ENCODE measurements at regions of chr3 and their contacts with region 1.

Region 1: GRCh38 chr3:108589146-108589997 is at the starts of genes CIP2A and DZIP3:
- DNase-seq: peak; percentile 64 to 96 (median 76)
- ATAC-seq: peak; percentile 80
- H3K4me3 ChIP-seq: peak within 1 kb of the TSS; percentile 79
- H3K4me3 Mint-ChIP-seq: peak within 1 kb of the TSS; percentile 96
- H3K27ac ChIP-seq: peak within 1 kb of the TSS; percentile 89 to 96
- H3K27ac Mint-ChIP-seq: peak within 1 kb of the TSS; percentile 99
- H3K4me1 ChIP-seq: peaks cover 12% of the 10 kb centered on the region
- H3K4me1 Mint-ChIP-seq: peaks cover 40% of the 10 kb centered on the region
- H3K27me3 ChIP-seq: no peaks in the 10 kb centered on the region
- H3K27me3 Mint-ChIP-seq: no peaks in the 10 kb centered on the region
- CTCF ChIP-seq: no peak
- total RNA-seq, gene CIP2A: 2.7 to 3.9 TPM
- total RNA-seq, gene DZIP3: 12.2 to 14.5 TPM

Region 2: DNA sequence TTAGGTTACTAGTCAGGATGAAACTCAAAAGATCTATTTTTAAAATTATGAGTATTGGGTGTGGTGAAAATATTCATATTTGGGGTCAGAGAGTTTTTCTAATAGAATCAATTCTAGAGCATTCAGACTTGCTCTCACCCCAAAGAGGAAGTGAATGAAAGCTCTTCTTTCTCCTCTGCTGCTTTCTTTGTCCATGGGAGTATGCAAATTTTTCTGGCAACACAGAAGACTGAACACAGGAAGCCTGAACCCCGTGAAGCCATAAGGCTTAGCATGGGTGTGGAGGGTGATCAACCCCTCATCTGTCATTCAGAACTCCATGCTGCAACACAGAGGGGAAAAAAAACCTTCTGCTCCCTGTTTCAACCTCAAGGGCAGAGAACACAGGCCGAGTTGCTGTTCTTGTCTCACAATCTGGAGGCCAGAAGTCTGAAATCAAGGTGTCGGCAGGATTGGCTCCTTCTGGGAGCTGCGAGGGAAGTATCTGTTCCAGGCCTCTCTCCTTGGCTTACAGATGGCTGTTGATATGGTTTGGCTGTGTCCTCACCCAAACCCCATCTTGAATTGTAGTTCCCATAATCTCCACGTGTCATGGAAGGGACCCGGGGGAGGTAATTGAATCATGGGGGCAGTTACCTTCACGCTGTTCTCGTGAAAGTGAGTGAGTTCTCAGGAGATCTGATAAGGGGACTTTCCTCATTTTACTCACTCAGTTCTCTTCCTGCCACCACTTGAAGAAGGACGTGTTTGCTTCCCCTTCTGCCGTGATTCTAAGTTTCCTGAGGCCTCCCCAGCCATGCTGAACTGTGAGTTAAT is 464.8 kb before region 1 on chr3:
- CTCF ChIA-PET with region 1: no interaction called
- POLR2A ChIA-PET with region 1: interaction called, 3 read pairs
- intact Hi-C with region 1: loop called (anchors 10 kb)
- DNase-seq: peak in 13 of 14 experiments; percentile 17 to 92 (median 45)
- ATAC-seq: peak; percentile 56
- H3K4me3 ChIP-seq: peak overlapping the region; percentile 55
- H3K4me3 Mint-ChIP-seq: peak overlapping the region; percentile 87
- H3K27ac ChIP-seq: peak overlapping the region; percentile 93
- H3K27ac Mint-ChIP-seq: peak overlapping the region; percentile 95
- H3K4me1 ChIP-seq: peaks cover 67% of the 10 kb centered on the region
- H3K4me1 Mint-ChIP-seq: peaks cover 73% of the 10 kb centered on the region
- H3K27me3 ChIP-seq: no peaks in the 10 kb centered on the region
- H3K27me3 Mint-ChIP-seq: no peaks in the 10 kb centered on the region
- CTCF ChIP-seq: no peak

Region 3: DNA sequence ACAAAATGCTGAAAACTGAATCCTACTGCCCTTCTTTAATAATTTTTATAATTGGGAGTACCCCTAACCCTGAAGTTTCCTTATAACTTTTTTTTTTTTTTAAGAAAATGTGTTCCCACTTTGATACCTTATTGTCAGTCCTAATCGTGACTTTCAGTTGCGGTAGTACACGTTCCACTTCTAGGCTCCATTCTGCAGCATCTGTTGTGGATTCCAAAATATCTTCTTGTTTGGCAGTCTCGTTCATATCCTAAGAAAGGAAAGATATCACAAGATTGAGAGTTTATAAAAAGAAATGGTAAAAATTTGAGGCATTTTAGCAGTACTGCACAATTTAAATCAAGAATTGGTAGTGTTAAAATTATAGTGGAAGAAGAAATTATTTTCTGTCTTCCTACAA is 398.0 kb before region 1 on chr3:
- CTCF ChIA-PET with region 1: no interaction called
- POLR2A ChIA-PET with region 1: no interaction called
- intact Hi-C with region 1: no loop called
- DNase-seq: no peak
- ATAC-seq: no peak
- H3K4me3 ChIP-seq: no peak overlapping the region
- H3K4me3 Mint-ChIP-seq: no peak overlapping the region
- H3K27ac ChIP-seq: no peak overlapping the region
- H3K27ac Mint-ChIP-seq: no peak overlapping the region
- H3K4me1 ChIP-seq: no peaks in the 10 kb centered on the region
- H3K4me1 Mint-ChIP-seq: no peaks in the 10 kb centered on the region
- H3K27me3 ChIP-seq: no peaks in the 10 kb centered on the region
- H3K27me3 Mint-ChIP-seq: no peaks in the 10 kb centered on the region
- CTCF ChIP-seq: no peak

Region 4: DNA sequence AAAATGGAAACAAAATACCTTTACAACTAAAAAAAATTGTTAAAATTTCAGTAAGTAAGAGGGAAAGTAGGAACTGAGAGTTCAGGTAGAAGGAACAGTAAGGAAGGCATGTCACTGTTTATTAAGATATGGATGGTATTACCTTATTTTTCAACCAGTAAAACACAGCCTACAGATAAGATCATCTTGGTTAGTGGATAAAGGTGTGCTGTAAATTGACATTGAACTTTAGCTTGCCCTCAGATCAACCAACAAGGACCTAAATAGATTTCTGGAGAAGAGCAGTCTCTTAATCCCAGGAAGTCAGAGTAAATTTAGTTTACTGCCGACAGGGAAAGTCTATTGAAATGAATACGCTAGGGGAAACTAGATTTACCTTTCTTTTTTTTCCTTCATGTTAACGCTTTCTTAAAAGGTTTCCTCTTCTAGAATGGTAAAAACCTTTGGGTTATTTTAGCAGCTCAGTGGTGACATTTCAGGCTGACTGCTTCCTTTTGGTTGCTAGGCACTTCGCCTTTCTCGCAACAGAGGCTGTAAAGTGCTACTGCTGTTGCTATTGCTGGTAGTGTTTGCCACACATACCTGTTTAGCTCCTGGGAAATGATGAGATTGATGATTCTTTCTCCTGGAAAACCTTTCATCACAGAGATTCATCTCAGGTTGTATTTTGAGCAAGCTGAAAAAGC is 13.0 kb after region 1 on chr3:
- CTCF ChIA-PET with region 1: interaction called, 7 read pairs
- POLR2A ChIA-PET with region 1: interaction called, 250 read pairs
- intact Hi-C with region 1: loop called in 1 of 2 experiments (anchors 2 kb)
- DNase-seq: peak in 11 of 14 experiments; percentile 7 to 83 (median 35)
- ATAC-seq: peak; percentile 92
- H3K4me3 ChIP-seq: peak overlapping the region; percentile 34
- H3K4me3 Mint-ChIP-seq: peak overlapping the region; percentile 87
- H3K27ac ChIP-seq: peak overlapping the region; percentile 52 to 78
- H3K27ac Mint-ChIP-seq: peak overlapping the region; percentile 87
- H3K4me1 ChIP-seq: peaks cover 20% of the 10 kb centered on the region
- H3K4me1 Mint-ChIP-seq: peaks cover 73% of the 10 kb centered on the region
- H3K27me3 ChIP-seq: no peaks in the 10 kb centered on the region
- H3K27me3 Mint-ChIP-seq: no peaks in the 10 kb centered on the region
- CTCF ChIP-seq: no peak

Region 5: DNA sequence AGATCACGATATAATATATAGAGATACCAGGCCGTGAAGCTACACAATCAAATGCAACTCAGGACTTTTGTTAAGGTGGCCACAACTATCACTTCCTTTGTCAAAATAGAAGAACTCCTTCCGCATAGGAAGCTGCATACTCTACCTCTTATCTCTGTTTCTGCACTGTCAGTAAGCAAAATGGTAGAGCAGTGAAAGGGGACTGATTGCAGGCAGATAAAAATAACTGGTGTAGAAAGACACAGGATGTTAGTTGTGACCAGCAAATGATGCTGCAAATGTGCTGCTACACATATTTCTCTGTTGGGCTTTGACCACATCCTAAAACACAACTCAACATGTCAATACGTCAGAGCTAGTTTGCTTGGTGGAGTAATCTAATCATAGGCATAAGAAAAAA is 216.9 kb after region 1 on chr3:
- CTCF ChIA-PET with region 1: no interaction called
- POLR2A ChIA-PET with region 1: interaction called, 11 read pairs
- intact Hi-C with region 1: loop called in 1 of 2 experiments (anchors 1 kb)
- DNase-seq: peak in 6 of 14 experiments; percentile 3 to 93 (median 60)
- ATAC-seq: peak; percentile 95
- H3K4me3 ChIP-seq: no peak overlapping the region
- H3K4me3 Mint-ChIP-seq: peak overlapping the region; percentile 2
- H3K27ac ChIP-seq: no peak overlapping the region
- H3K27ac Mint-ChIP-seq: peak overlapping the region; percentile 76
- H3K4me1 ChIP-seq: peaks cover 8% of the 10 kb centered on the region
- H3K4me1 Mint-ChIP-seq: peaks cover 33% of the 10 kb centered on the region
- H3K27me3 ChIP-seq: no peaks in the 10 kb centered on the region
- H3K27me3 Mint-ChIP-seq: no peaks in the 10 kb centered on the region
- CTCF ChIP-seq: no peak

Region 6: DNA sequence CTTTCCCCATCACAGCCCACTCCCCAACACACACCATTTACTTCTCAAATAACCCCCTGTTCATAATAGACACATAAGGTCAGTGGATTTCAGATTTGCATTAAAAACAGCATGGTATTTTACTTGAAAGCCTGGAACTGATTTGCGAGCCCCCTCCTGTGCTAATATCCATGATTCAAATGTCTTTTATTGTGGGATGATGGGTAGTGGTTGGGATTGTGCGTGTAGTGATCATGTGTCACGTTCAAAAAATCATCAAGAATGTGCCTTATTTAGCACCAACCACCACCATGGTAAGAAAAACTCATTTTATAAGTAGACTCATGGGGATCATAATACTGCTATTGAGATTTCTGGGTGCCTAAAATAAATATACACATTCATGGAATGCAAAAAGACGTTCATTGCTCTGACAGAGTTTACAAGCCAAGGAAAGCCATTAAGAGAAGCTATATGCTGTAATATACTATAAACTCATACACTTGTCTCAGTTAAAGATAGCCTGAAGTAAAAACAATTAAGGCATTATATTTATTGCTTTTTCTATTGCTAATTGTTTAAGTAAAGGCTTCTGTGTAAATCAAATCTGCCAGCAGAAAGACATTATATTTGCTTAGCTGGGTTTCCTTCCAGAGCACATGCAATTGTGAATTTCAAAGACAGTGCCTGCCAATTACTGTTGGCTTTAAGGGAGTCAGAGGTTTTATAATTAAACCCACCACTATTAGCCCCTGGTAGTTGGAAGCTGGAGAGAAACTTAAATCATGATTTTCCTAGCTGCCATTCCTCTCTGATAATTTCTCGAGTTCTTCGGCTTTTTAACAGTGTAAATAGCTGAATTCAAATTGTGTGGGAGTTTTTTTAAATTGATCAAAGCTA is 237.2 kb after region 1 on chr3:
- CTCF ChIA-PET with region 1: no interaction called
- POLR2A ChIA-PET with region 1: interaction called, 8 read pairs
- intact Hi-C with region 1: loop called (anchors 5 kb)
- DNase-seq: no peak
- ATAC-seq: peak; percentile 12
- H3K4me3 ChIP-seq: peak overlapping the region; percentile 65
- H3K4me3 Mint-ChIP-seq: peak overlapping the region; percentile 90
- H3K27ac ChIP-seq: peak overlapping the region; percentile 20 to 47
- H3K27ac Mint-ChIP-seq: peak overlapping the region; percentile 85
- H3K4me1 ChIP-seq: peaks cover 12% of the 10 kb centered on the region
- H3K4me1 Mint-ChIP-seq: peaks cover 59% of the 10 kb centered on the region
- H3K27me3 ChIP-seq: no peaks in the 10 kb centered on the region
- H3K27me3 Mint-ChIP-seq: no peaks in the 10 kb centered on the region
- CTCF ChIP-seq: no peak